ENCODE measurements at regions of chr10 and their contacts with region 1.

Region 1: DNA sequence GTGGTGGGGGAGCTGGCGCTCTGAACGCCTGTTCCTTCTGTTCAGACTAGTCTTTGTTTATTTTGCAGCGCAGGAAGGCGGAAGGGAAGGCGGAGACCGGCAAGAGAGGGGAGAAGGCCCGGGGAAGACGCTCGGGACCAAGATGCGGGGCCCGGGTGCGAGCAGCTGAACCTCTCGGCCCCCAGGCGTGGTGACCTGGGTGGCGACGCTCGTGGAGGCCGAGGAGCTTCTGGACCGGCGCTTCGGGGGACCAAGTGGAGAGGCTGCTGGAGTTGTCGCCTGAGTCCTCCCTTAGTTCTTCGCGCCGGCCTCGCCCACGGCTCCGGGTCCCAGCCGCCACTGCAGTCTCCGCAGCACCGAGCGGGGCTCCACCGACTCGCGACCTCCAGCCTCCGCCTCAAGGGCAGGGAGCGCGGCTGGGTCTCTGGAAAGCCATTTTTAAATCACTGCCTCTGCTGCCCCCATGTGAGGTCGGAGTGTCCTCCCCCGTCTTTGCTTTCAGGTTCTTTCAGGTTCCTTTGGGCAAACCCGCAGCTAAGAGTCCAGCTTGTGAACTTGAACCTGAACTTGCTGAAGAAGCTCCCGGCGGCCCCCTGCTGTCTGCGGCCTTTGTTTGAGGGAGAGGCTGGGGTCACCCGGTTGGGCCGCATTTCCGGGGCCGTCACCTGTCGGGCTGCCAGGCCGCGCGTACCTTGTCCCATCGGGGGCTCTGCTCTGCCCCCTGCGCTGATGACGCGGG is 135.9 kb downstream of the KIF20B start:
- DNase-seq: peak; percentile 30
- H3K4me3 ChIP-seq: peak overlapping the region; percentile 21 to 78 (median 57)
- H3K27ac ChIP-seq: peak overlapping the region; percentile 4 to 74 (median 62)
- H3K4me1 ChIP-seq: peaks cover 0 to 12% (median 4%) of the 10 kb centered on the region in 4 donors
- H3K27me3 ChIP-seq: peaks cover 4% of the 10 kb centered on the region
- CTCF ChIP-seq: no peak
- EP300 ChIP-seq: no peak
- POLR2A ChIP-seq: no peak

Region 2: DNA sequence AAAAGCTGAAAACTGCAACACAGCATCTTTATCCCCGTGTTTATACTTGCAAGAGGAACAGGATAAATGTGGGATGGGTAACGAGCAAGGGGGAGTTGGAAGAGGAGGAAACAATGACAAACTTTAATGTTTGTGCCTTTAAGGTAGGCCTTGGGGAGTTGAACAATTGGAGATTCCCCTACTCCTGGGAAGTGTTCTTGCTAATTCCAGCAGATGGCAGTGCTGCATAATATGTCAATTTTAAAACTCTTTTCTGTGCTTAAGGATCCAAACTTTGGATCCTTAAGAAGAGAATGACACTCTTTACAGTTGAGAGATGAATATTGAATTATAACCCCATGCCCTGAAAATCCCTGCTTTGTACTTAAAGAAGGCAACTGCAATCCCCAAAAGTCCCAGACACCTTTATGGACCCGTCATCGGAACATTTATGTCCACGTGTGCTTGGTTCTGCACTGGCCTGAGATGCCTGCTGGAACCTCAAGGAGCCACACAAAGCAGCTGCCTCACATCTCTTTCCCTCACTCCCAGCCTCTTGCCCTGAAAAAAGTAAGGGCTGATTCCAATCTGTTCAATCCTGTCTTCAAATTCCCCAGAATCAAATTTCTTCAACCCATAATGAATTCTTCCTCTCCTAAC is 411.0 kb before region 1 on chr10:
- in situ Hi-C with region 1: no loop called
- intact Hi-C with region 1: no loop called
- DNase-seq: no peak
- H3K4me3 ChIP-seq: no peak overlapping the region
- H3K27ac ChIP-seq: no peak overlapping the region
- H3K4me1 ChIP-seq: no peaks in the 10 kb centered on the region
- H3K27me3 ChIP-seq: no peaks in the 10 kb centered on the region
- CTCF ChIP-seq: peak; percentile 65 to 78 (median 72)
- EP300 ChIP-seq: no peak
- POLR2A ChIP-seq: no peak

Region 3: GRCh38 chr10:90347239-90347638 is 509.9 kb after region 1 on chr10:
- in situ Hi-C with region 1: no loop called
- intact Hi-C with region 1: loop called (anchors 5 kb)
- DNase-seq: no peak
- H3K4me3 ChIP-seq: no peak overlapping the region
- H3K27ac ChIP-seq: no peak overlapping the region
- H3K4me1 ChIP-seq: no peaks in the 10 kb centered on the region
- H3K27me3 ChIP-seq: no peaks in the 10 kb centered on the region
- CTCF ChIP-seq: no peak
- EP300 ChIP-seq: no peak
- POLR2A ChIP-seq: no peak